Ovary (tissue), 10 donors: ENCODE measurements at regions of chr21 and their contacts with region 1.

Region 1: DNA sequence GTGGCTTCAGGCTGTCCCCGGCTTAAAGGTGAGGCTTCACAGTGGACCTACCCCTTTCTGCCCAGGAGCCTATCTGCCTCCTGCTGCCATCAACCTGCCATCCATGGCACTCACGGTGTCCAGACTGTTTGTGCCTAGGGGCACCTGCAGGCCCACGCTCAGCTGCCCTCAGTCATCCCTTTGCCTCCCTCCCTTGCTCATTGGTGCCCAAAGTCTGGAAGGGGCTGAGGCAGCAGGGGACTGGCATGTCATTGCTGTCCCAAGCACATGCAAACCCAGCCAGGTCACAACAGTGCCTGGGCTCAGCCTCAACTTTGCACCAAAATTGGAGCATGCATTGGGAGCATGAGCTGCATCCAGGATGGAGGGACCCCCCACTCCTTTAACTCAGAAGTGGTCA is 1142.7 kb upstream of the NCAM2 start:
- DNase-seq: no peak
- H3K4me3 ChIP-seq: no peak overlapping the region
- H3K27ac ChIP-seq: no peak overlapping the region
- H3K4me1 ChIP-seq: no peaks in the 10 kb centered on the region
- H3K27me3 ChIP-seq: no peaks in the 10 kb centered on the region
- CTCF ChIP-seq: no peak
- EP300 ChIP-seq: no peak
- POLR2A ChIP-seq: no peak

Region 2: DNA sequence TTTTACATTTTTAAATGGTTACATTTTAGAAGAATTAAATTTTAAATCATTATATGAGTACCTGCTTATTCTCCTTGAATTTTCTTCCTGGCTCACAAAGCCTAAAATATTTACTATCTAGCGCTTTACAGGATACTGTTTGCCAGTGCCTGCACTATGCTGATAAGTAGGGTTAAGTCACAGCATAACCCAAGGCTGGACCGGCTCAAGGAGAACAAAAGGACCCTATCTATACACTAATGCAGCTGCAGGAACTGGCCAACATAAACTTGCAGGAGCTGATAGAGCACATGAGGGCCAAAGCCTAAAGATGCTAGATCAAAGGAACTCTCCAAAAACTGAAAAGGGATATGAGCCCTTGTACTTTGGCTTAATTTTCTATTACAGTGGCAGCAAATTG is 365.0 kb before region 1 on chr21:
- intact Hi-C with region 1: no loop called
- DNase-seq: no peak
- H3K4me3 ChIP-seq: no peak overlapping the region
- H3K27ac ChIP-seq: no peak overlapping the region
- H3K4me1 ChIP-seq: no peaks in the 10 kb centered on the region
- H3K27me3 ChIP-seq: no peaks in the 10 kb centered on the region
- CTCF ChIP-seq: no peak
- EP300 ChIP-seq: no peak
- POLR2A ChIP-seq: no peak

Region 3: GRCh38 chr21:19776076-19776475 is 79.4 kb before region 1 on chr21:
- intact Hi-C with region 1: loop called in 1 of 4 experiments (anchors 5 kb)
- DNase-seq: no peak
- H3K4me3 ChIP-seq: no peak overlapping the region
- H3K27ac ChIP-seq: no peak overlapping the region
- H3K4me1 ChIP-seq: no peaks in the 10 kb centered on the region
- H3K27me3 ChIP-seq: peaks cover 2% of the 10 kb centered on the region
- CTCF ChIP-seq: no peak
- EP300 ChIP-seq: no peak
- POLR2A ChIP-seq: no peak

Region 4: DNA sequence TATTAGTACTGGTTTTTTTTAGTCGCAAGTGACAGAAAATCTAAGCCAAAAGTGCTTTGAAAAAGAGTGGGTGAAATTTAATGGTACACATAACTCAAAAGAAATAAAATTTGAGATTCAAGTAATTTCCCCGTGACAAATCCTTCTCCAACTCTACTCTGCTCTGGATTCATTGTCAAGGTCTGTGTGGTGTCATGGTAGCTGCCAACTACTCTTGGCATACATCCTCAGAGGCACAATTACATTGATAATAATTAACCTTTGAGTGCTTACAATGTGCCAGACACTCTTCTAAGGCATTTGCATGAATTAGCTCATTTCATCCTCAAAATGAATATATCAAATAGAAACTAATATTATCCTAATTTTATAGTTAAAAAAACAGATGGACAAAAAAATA is 11.2 kb before region 1 on chr21:
- intact Hi-C with region 1: no loop called
- DNase-seq: no peak
- H3K4me3 ChIP-seq: no peak overlapping the region
- H3K27ac ChIP-seq: no peak overlapping the region
- H3K4me1 ChIP-seq: no peaks in the 10 kb centered on the region
- H3K27me3 ChIP-seq: no peaks in the 10 kb centered on the region
- CTCF ChIP-seq: no peak
- EP300 ChIP-seq: no peak
- POLR2A ChIP-seq: no peak

Region 5: DNA sequence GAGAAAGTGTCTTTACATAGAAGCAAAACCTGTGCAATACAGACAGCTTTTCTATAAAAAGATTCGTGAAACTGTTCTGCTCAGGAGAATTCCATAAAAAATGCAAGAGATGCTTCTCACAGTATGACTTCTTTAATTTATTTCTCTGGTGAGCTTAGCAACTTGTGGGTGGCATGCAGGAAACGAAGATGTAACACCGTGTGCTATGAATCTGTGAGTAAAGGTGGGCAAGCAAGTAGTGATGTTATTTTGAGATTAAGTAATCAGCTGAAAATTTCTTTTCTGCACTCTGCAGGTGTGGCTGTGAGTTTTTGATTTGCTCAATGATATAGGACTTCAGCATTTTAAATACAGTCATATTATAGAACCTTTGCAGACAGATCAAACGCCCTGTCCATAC is 485.9 kb after region 1 on chr21:
- intact Hi-C with region 1: no loop called
- DNase-seq: no peak
- H3K4me3 ChIP-seq: no peak overlapping the region
- H3K27ac ChIP-seq: no peak overlapping the region
- H3K4me1 ChIP-seq: no peaks in the 10 kb centered on the region
- H3K27me3 ChIP-seq: no peaks in the 10 kb centered on the region
- CTCF ChIP-seq: no peak
- EP300 ChIP-seq: no peak
- POLR2A ChIP-seq: no peak